ENCODE measurements at regions of chr7 and their contacts with region 1.

Region 1: GRCh38 chr7:98168181-98168905 is 42.9 kb upstream of the BHLHA15 start:
- H3K4me3 ChIP-seq: no peak overlapping the region
- H3K27ac ChIP-seq: no peak overlapping the region
- H3K4me1 ChIP-seq: no peaks in the 10 kb centered on the region
- CTCF ChIP-seq: peak; percentile 40; the same call in 1 of the 2 replicates

Region 2: GRCh38 chr7:98021588-98022351 is 146.6 kb before region 1 on chr7:
- CTCF ChIA-PET with region 1: interaction called, 533 read pairs
- POLR2A ChIA-PET with region 1: interaction called, 3 read pairs
- H3K4me3 ChIP-seq: no peak overlapping the region
- H3K27ac ChIP-seq: no peak overlapping the region
- H3K4me1 ChIP-seq: no peaks in the 10 kb centered on the region
- CTCF ChIP-seq: peak; percentile 91

Region 3: DNA sequence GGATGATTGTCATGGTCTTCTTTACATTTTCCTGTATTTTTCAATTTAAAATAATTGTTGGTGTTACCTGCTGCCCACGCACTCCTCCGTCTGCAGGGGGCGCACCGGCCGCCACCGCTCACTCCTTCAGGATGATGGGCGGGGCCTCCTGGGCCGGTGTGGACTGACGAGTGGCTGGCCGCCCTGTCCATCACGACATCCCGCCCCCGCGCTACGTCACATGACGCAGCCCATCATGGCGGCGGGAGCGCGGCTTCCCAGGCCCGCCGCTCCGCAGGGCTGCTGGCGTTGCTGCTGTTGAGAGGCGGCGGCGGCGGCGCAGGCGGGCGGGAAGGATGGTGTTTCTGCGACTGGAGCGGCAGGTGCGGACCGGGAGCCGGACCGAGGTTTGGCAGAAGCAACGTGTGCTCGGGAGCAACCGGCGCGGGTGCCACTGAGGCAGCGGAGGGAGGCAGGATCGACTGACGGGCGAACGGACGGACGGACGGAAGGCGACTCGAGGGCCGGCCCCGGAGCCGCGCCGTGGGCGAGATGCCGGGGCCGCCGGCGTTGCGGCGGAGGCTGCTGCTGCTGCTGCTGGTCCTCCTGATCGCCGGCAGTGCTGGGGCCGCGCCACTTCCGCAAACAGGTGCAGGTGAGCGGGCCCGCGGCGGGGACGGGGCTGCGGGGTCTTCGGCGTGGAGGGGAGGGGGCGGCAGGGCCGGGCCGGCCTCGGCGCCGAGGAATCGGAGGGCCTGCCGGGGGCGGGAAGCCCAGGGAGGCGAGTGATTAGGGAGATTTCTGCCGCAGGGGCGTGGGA is 61.5 kb before region 1 on chr7 and contains the start of gene LMTK2:
- CTCF ChIA-PET with region 1: interaction called, 78 read pairs
- POLR2A ChIA-PET with region 1: no interaction called
- H3K4me3 ChIP-seq: peak within 1 kb of the TSS; percentile 98
- H3K27ac ChIP-seq: peak within 1 kb of the TSS; percentile 84
- H3K4me1 ChIP-seq: peaks cover 21% of the 10 kb centered on the region
- CTCF ChIP-seq: peak; percentile 97

Region 4: DNA sequence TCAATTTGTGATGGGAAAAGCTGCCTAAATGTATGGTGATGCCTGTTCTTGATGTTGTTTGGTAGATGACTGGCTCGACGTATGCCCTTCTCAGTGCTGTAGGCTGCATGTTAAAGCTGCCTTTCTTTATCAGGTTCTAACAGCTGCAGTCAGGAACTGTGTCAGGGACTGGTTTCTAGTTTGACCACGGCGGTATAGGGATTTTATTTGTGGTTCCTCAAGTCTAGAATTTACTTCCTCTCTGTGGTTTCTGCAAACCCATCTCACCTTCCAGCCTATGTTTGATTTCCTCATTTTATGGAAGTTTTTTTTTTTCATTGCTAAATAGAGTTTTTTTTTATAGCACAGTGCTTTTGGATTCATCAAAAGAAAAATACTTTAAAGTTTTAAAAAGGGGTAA is 35.2 kb before region 1 on chr7:
- CTCF ChIA-PET with region 1: interaction called, 16 read pairs
- POLR2A ChIA-PET with region 1: no interaction called
- H3K4me3 ChIP-seq: no peak overlapping the region
- H3K27ac ChIP-seq: no peak overlapping the region
- H3K4me1 ChIP-seq: peaks cover 16% of the 10 kb centered on the region
- CTCF ChIP-seq: no peak

Region 5: GRCh38 chr7:98178347-98178746 is 10.0 kb after region 1 on chr7:
- CTCF ChIA-PET with region 1: interaction called, 27 read pairs
- POLR2A ChIA-PET with region 1: no interaction called
- H3K4me3 ChIP-seq: no peak overlapping the region
- H3K27ac ChIP-seq: no peak overlapping the region
- H3K4me1 ChIP-seq: no peaks in the 10 kb centered on the region
- CTCF ChIP-seq: no peak

Region 6: GRCh38 chr7:98323597-98324322 is 155.4 kb after region 1 on chr7:
- CTCF ChIA-PET with region 1: no interaction called
- POLR2A ChIA-PET with region 1: no interaction called
- H3K4me3 ChIP-seq: no peak overlapping the region
- H3K27ac ChIP-seq: no peak overlapping the region
- H3K4me1 ChIP-seq: no peaks in the 10 kb centered on the region
- CTCF ChIP-seq: no peak

Measured in HEK293 (cell line).